HepG2 (cell line): ENCODE measurements at regions of chr3 and their contacts with region 1.

Region 1: DNA sequence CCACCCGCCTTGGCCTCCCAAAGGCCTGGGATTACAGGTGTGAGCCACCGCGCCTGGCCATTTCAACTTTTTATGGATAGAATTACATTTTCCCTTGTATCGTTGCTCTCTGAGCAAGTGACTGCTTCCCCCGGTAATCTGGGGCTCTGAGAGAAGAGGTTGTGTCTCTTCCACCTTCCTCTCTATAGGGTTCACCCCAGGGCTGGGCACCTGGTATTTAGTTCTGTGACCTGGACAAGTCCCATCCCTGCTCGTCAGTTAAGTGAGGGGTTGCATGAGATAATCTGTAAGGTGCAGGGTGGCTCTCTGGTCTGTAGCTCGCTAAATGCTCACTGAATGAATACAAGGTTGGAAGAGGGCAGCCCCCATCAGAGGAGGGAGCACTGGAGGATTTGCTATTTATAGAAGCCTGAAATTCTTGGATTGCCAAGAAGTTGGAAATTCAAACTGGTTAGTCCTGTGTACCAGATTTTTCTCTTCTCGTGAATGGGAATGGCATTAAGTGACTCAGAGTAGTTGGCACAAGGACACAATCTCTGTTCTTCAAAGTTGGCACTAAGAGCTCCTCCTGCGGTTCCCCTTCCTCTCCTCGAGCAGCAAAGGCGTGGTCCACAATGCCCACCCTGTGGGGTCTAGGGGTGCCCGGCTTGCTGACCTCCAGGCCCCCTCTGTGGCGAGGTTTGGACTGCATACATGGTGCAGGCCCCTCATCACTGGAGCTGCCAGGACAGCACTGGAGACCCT is 68.1 kb upstream of the DLG1 start:
- DNase-seq: no peak
- ATAC-seq: no peak
- H3K4me3 ChIP-seq: no peak overlapping the region
- H3K27ac ChIP-seq: no peak overlapping the region
- H3K4me1 ChIP-seq: peaks cover 87% of the 10 kb centered on the region
- H3K27me3 ChIP-seq: no peaks in the 10 kb centered on the region
- CTCF ChIP-seq: no peak
- EP300 ChIP-seq: no peak
- POLR2A ChIP-seq: no peak
- RAD21 ChIP-seq: no peak

Region 2: GRCh38 chr3:197029511-197030167 is 336.8 kb before region 1 on chr3 and contains the start of gene MELTF:
- CTCF ChIA-PET with region 1: no interaction called
- POLR2A ChIA-PET with region 1: no interaction called
- in situ Hi-C with region 1: no loop called
- intact Hi-C with region 1: no loop called
- DNase-seq: peak; percentile 27
- ATAC-seq: peak; percentile 83
- H3K4me3 ChIP-seq: peak within 1 kb of the TSS; percentile 75 to 78 (median 78)
- H3K27ac ChIP-seq: no peak within 1 kb of the TSS
- H3K4me1 ChIP-seq: peaks cover 39% of the 10 kb centered on the region
- H3K27me3 ChIP-seq: 0 out of 5 replicates have a peak, but pooled peaks cover 0 to 7% of the 10 kb centered on the region in 2 experiments
- CTCF ChIP-seq: peak; percentile 74
- EP300 ChIP-seq: no peak
- POLR2A ChIP-seq: peak in 1 of 2 experiments; percentile 51; a peak in 1 of 4 replicates
- RAD21 ChIP-seq: peak; percentile 89
- total RNA-seq, gene MELTF: 0.97 and 3.2 TPM in 2 replicates

Region 3: DNA sequence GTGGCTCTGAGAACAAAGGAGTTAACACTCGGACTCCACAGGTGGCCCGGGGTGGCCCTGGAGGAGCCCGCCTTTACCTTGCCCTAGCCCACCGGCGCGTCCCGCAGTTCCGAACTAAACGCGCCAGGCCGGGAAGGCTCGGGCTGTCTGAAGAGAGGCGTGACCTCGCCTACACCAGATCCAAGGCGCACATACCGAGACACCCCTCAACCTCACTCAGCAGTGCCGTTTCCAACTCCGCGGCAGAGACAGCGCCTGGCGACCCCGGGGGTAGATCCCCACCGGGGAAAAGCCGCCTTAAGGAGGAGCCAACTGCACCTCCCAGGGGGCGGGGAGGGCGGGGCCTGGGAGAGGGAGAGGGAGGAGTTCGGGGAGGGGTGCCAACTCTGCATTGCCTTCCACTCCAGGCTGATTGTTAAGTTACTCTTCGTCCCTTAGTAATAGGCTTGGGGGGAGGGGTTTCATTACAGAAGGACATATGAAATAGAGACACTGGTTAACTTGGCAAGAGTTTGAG is 68.1 kb before region 1 on chr3 and contains the start of gene DLG1:
- CTCF ChIA-PET with region 1: no interaction called
- POLR2A ChIA-PET with region 1: interaction called, 32 read pairs
- in situ Hi-C with region 1: loop called (anchors 5 kb)
- intact Hi-C with region 1: loop called (anchors 2 kb)
- DNase-seq: peak; percentile 88
- ATAC-seq: peak; percentile 78
- H3K4me3 ChIP-seq: peak within 1 kb of the TSS; percentile 91 to 95 (median 94)
- H3K27ac ChIP-seq: peak within 1 kb of the TSS; percentile 98
- H3K4me1 ChIP-seq: peaks cover 54% of the 10 kb centered on the region
- H3K27me3 ChIP-seq: no peaks in the 10 kb centered on the region; a peak in 1 of 5 replicates
- CTCF ChIP-seq: no peak
- EP300 ChIP-seq: no peak
- POLR2A ChIP-seq: peak; percentile 87 to 88
- RAD21 ChIP-seq: peak; percentile 49; the same call in 1 of the 2 replicates
- total RNA-seq, gene DLG1: 104 and 105 TPM in 2 replicates

Region 4: GRCh38 chr3:197317250-197317963 is 49.1 kb before region 1 on chr3:
- CTCF ChIA-PET with region 1: no interaction called
- POLR2A ChIA-PET with region 1: interaction called, 13 read pairs
- in situ Hi-C with region 1: no loop called
- intact Hi-C with region 1: loop called (anchors 5 kb)
- DNase-seq: no peak
- ATAC-seq: no peak
- H3K4me3 ChIP-seq: no peak overlapping the region
- H3K27ac ChIP-seq: no peak overlapping the region
- H3K4me1 ChIP-seq: peaks cover 20% of the 10 kb centered on the region
- H3K27me3 ChIP-seq: no peaks in the 10 kb centered on the region; a peak in 1 of 5 replicates
- CTCF ChIP-seq: no peak
- EP300 ChIP-seq: no peak
- POLR2A ChIP-seq: no peak
- RAD21 ChIP-seq: no peak

Region 5: GRCh38 chr3:197339841-197340520 is 26.5 kb before region 1 on chr3:
- CTCF ChIA-PET with region 1: no interaction called
- POLR2A ChIA-PET with region 1: interaction called, 20 read pairs
- in situ Hi-C with region 1: no loop called
- intact Hi-C with region 1: no loop called
- DNase-seq: peak; percentile 43
- ATAC-seq: peak; percentile 91
- H3K4me3 ChIP-seq: peak overlapping the region; percentile 22 to 52 (median 29); a peak in 5 of 6 replicates
- H3K27ac ChIP-seq: no peak overlapping the region
- H3K4me1 ChIP-seq: peaks cover 34% of the 10 kb centered on the region
- H3K27me3 ChIP-seq: no peaks in the 10 kb centered on the region
- CTCF ChIP-seq: no peak
- EP300 ChIP-seq: no peak
- POLR2A ChIP-seq: peak in 1 of 2 experiments; percentile 46; a peak in 1 of 4 replicates
- RAD21 ChIP-seq: no peak

Region 6: DNA sequence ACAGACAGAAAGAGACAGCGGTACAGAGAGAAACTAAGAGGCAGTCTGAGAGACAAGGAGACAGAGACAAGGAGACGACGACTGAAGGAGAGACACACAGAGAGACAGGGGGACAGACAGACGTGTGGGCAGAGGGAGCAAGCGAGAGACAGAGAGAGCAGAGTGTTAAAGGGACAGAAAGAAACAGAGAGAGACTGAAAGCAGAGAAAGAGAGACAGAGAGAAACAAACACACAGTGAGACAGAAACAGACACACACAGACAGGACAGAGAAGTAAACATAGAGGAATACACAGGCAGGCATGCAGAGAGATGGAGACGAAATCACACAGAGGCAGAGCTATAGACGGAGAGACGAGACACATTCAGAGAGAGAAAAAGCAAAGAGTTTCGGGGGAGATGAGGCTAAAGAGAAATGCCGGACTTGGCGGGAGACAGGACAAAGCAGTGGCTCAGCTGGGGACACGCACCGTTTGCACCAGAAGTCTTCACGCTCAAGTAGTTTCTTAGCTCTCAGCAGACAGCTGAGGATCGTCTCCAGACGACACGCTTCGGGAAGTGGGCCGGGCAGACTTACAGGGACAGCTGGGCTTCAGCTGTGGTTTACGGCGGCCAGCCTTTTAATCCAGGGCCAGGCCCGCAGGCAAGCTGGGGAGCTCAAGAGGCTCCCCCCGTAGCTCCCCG is 12.0 kb before region 1 on chr3:
- CTCF ChIA-PET with region 1: no interaction called
- POLR2A ChIA-PET with region 1: interaction called, 51 read pairs
- in situ Hi-C with region 1: no loop called
- intact Hi-C with region 1: no loop called
- DNase-seq: no peak
- ATAC-seq: peak; percentile 44
- H3K4me3 ChIP-seq: no peak overlapping the region
- H3K27ac ChIP-seq: no peak overlapping the region
- H3K4me1 ChIP-seq: peaks cover 45% of the 10 kb centered on the region
- H3K27me3 ChIP-seq: no peaks in the 10 kb centered on the region
- CTCF ChIP-seq: no peak
- EP300 ChIP-seq: no peak
- POLR2A ChIP-seq: no peak
- RAD21 ChIP-seq: no peak

Region 7: DNA sequence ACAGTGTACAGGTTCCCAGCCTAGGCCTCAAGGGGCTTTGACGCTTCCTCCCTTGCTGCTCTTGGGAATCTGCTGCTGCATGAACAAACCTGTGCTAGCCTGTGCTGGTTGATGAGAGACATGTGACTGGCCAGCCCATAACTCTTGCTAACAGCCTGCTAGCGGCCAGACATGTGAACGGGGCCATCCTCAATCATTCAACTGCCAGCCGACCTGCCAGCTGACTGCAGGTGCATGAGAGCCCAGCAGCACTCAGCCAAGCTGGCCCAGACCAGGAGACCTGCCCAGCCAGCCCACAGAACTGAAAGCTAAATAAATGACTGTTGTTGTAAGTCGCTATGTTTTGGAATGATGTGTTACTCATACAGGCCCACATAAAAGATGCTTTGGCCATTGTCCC is 14.3 kb after region 1 on chr3:
- CTCF ChIA-PET with region 1: no interaction called
- POLR2A ChIA-PET with region 1: interaction called, 17 read pairs
- in situ Hi-C with region 1: no loop called
- intact Hi-C with region 1: no loop called
- DNase-seq: no peak
- ATAC-seq: no peak; the same call in 2 of the 3 replicates
- H3K4me3 ChIP-seq: no peak overlapping the region
- H3K27ac ChIP-seq: no peak overlapping the region
- H3K4me1 ChIP-seq: peaks cover 16% of the 10 kb centered on the region
- H3K27me3 ChIP-seq: no peaks in the 10 kb centered on the region
- CTCF ChIP-seq: no peak
- EP300 ChIP-seq: no peak
- POLR2A ChIP-seq: no peak
- RAD21 ChIP-seq: no peak

Region 8: GRCh38 chr3:197466586-197467399 is 100.3 kb after region 1 on chr3:
- CTCF ChIA-PET with region 1: no interaction called
- POLR2A ChIA-PET with region 1: interaction called, 20 read pairs
- in situ Hi-C with region 1: no loop called
- intact Hi-C with region 1: no loop called
- DNase-seq: no peak
- ATAC-seq: 0 out of 3 replicates have a peak, but pooled peaks have one; percentile 1
- H3K4me3 ChIP-seq: peak overlapping the region; percentile 28 to 56 (median 36); a peak in 5 of 6 replicates
- H3K27ac ChIP-seq: peak overlapping the region; percentile 96
- H3K4me1 ChIP-seq: peaks cover 87% of the 10 kb centered on the region
- H3K27me3 ChIP-seq: no peaks in the 10 kb centered on the region
- CTCF ChIP-seq: no peak
- EP300 ChIP-seq: no peak
- POLR2A ChIP-seq: peak in 1 of 2 experiments; percentile 10; a peak in 1 of 4 replicates
- RAD21 ChIP-seq: no peak

Region 9: DNA sequence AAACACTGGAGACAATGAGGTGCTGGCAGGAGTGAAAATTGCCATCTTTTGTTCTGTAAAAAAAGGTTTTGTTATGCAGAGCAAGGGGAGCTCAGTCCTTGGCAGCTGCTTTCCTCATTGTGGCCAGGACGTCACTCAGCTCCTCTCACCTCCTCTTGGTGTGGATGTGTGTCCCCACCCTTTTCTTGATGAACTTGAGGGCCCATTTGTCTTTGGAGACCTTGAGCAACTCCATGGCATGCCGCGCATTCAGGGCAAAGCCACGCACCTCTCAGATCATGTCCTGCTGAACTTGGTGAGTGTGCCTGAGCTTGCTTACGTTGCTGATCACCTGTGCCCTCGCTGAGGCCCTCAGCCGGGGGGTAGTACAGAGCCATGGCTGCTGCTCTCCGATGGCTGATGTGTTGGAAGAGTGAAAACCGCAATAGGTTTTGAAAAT is 213.8 kb after region 1 on chr3:
- CTCF ChIA-PET with region 1: no interaction called
- POLR2A ChIA-PET with region 1: no interaction called
- in situ Hi-C with region 1: no loop called
- intact Hi-C with region 1: no loop called
- DNase-seq: no peak
- ATAC-seq: no peak
- H3K4me3 ChIP-seq: no peak overlapping the region
- H3K27ac ChIP-seq: no peak overlapping the region
- H3K4me1 ChIP-seq: peaks cover 23% of the 10 kb centered on the region
- H3K27me3 ChIP-seq: no peaks in the 10 kb centered on the region
- CTCF ChIP-seq: no peak
- EP300 ChIP-seq: no peak
- POLR2A ChIP-seq: no peak
- RAD21 ChIP-seq: no peak

Region 10: DNA sequence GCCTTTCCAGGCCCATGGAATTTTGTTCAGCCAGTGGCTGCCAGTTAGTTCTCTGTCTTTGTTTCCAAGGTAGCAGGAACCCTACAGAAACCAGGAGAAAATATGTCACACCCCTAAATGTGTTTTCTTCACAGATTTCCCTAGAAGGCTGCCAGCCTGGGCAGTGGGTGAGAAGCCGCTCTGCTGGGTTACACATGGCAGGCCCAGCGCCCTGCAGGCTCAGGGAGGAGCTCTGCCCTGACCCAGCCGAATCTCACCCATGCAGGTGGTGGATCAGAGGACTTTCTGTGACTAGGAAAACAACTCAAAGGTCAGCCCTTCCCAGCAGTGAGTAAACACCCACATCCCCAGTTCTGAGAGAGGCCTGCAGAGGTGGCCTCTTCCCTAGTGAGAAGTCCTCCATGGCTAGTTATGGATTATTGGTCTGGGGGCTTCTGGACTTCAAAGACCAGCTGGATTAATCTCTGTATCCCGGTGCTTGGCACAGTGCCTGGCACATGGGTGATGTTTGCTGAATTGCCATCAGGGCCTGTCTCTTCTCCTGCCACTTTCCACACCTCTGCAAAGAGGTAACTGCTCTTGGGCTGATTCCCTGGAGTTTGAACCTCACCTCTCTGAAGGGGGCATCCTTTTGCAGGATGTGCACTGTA is 224.0 kb after region 1 on chr3:
- CTCF ChIA-PET with region 1: no interaction called
- POLR2A ChIA-PET with region 1: no interaction called
- in situ Hi-C with region 1: no loop called
- intact Hi-C with region 1: no loop called
- DNase-seq: peak; percentile 97
- ATAC-seq: peak; percentile 99
- H3K4me3 ChIP-seq: peak overlapping the region in 2 of 3 experiments; percentile 19 to 57; a peak in 4 of 6 replicates
- H3K27ac ChIP-seq: peak overlapping the region; percentile 97
- H3K4me1 ChIP-seq: peaks cover 96% of the 10 kb centered on the region
- H3K27me3 ChIP-seq: no peaks in the 10 kb centered on the region
- CTCF ChIP-seq: peak; percentile 45
- EP300 ChIP-seq: peak in 1 of 2 experiments; percentile 95; a peak in 2 of 4 replicates
- POLR2A ChIP-seq: peak; percentile 71 to 78; a peak in 3 of 4 replicates
- RAD21 ChIP-seq: peak; percentile 59; the same call in 1 of the 2 replicates